ENCODE measurements at regions of chr12 and their contacts with region 1.

Region 1: DNA sequence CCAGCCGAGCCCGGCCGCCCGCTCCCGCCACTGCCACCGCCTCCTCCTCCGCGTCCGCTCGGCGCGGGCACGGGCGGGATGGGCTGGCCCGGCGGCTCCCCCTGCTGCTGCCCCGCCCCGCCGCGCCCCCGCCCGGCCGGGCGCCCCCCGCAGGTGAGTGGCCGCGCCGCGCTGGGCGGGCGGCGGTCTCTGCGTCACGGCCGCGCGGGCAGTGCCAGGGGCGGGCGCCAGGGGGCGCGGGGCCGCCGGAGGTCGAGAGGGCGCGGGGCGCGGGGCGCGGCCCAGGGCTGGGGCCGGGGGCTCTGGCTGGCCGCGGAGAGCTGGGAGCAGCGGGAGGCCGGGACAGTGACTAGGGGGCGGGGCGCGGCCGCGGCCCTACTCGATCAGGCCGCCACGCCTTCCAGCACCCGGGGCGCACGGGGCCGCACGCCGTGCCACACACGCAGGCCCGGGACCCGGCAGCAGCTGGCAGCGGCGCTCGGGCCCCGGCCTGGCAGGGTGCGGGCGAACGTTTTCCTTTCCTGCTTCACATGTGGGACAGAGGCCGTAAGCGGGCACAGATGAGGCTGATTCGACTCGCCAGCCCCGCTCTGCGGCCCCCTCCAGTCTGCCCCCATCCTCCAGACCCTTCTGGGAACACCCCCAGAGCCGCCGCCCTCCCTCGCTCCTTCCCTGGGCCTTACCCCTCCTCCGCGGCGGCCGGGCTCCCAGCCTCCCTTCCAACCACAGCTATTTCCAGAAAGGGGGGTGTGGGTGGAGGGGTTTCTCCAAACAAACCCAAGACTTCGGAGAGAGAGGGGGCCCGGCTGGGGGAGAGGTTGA is 2.4 kb upstream of the TNS2 start:
- DNase-seq: peak in 1 of 2 experiments; percentile 86
- H3K4me3 ChIP-seq: no peak overlapping the region; the same call in 1 of the 2 replicates
- H3K27ac ChIP-seq: peak overlapping the region; percentile 36; the same call in 1 of the 2 replicates
- H3K4me1 ChIP-seq: peaks cover 25% of the 10 kb centered on the region
- H3K27me3 ChIP-seq: no peaks in the 10 kb centered on the region
- CTCF ChIP-seq: peak; percentile 42

Region 2: DNA sequence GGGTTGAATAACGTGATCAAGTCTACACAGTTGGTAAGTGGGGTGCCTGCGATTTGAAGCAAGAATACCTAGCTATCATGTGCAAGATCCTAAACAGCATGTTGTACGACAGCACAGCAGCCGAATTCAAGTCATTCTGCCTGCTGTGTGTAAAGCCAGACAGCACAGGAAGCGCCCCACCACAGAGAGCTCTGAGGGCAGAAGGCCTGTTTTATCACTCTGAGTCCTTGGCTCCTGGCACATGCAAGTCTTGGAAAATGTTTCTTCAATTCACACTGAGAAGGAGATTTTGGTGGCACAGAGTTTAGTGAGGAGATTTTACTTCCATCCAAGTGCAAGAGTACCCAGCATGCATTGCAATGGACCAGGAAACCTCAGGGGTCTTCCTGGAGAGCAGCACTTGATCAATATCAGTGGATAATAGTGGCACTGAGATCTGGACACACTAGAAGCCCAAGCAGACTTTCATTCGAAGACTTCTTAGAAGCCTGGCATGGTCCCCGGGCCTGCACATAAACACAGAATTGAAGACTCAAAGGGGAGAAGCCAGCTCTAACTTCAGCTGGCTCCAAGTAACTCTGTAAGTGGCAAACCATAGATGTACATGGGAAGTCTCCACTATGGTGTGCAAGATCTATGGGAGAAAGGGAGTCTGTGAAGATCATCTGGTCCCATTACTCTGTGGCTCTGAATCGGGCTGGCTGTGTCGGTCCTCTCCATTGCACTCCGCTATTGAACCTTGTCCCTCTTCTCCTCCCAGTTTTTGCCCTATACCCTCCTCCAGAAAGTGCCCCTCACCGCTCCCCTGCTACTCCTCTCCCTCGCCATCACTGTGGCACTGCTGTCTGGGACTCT is 365.7 kb before region 1 on chr12:
- CTCF ChIA-PET with region 1: no interaction called
- POLR2A ChIA-PET with region 1: no interaction called
- intact Hi-C with region 1: no loop called
- DNase-seq: no peak
- H3K4me3 ChIP-seq: no peak overlapping the region
- H3K27ac ChIP-seq: no peak overlapping the region
- H3K4me1 ChIP-seq: no peaks in the 10 kb centered on the region
- H3K27me3 ChIP-seq: no peaks in the 10 kb centered on the region
- CTCF ChIP-seq: no peak

Region 3: GRCh38 chr12:53005986-53006809 is 41.2 kb before region 1 on chr12 and contains the start of gene EIF4B:
- CTCF ChIA-PET with region 1: no interaction called
- POLR2A ChIA-PET with region 1: no interaction called
- intact Hi-C with region 1: loop called (anchors 5 kb)
- DNase-seq: peak; percentile 97 to 99
- H3K4me3 ChIP-seq: peak within 1 kb of the TSS; percentile 82
- H3K27ac ChIP-seq: peak within 1 kb of the TSS; percentile 92
- H3K4me1 ChIP-seq: peaks cover 48% of the 10 kb centered on the region
- H3K27me3 ChIP-seq: no peaks in the 10 kb centered on the region
- CTCF ChIP-seq: 0 out of 2 replicates have a peak, but pooled peaks have one; percentile 9
- total RNA-seq, gene EIF4B: 531 and 615 TPM in 2 replicates

Region 4: DNA sequence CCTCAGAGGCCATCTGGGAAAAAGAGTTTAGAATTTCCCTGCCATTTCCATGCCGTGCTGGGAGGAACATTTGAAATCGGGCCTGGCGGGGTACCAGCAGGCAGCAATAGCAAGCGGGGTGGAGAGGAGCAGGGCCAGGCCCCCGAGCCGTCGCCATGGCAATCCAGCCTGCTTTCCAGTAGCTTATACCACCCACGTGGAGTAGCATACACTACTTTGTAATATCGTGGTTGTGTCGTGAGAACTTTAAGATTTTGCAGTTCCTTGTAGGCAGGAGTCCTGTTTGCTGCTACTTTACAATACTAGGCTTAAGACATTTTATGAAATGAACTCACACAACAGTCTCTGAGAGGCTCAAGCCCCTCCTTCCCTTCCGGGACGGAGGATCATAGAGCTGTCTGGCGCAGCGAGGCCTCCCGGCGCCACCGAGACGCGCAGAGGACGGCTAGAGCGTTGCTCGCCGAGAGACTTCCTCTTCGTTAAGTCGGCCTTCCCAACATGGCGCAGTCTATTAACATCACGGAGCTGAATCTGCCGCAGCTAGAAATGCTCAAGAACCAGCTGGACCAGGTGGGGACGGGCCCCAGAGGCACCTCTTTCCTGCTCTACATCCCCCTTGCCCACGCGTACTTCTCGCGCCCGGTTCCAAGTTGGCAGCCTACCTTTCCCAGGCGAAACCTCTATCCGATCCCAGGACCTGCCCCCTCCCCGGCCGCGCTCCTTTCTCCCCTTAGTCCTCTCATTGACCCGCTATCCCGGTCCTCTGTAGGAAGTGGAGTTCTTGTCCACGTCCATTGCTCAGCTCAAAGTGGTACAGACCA is 247.8 kb after region 1 on chr12 and contains the start of gene PFDN5:
- CTCF ChIA-PET with region 1: no interaction called
- POLR2A ChIA-PET with region 1: interaction called, 21 read pairs
- intact Hi-C with region 1: loop called (anchors 5 kb)
- DNase-seq: peak; percentile 71 to 83
- H3K4me3 ChIP-seq: peak within 1 kb of the TSS; percentile 98
- H3K27ac ChIP-seq: peak within 1 kb of the TSS; percentile 38
- H3K4me1 ChIP-seq: peaks cover 40% of the 10 kb centered on the region
- H3K27me3 ChIP-seq: no peaks in the 10 kb centered on the region
- CTCF ChIP-seq: no peak
- total RNA-seq, gene PFDN5: 291 and 303 TPM in 2 replicates

Measured in PC-9 (cell line).